A673 (cell line): ENCODE measurements at regions of chr5 and their contacts with region 1.

Region 1: GRCh38 chr5:142324871-142325724 is at the start of gene SPRY4:
- DNase-seq: peak; percentile 99
- H3K4me3 ChIP-seq: peak within 1 kb of the TSS; percentile 77
- H3K27ac ChIP-seq: peak within 1 kb of the TSS; percentile 98
- H3K4me1 ChIP-seq: peaks cover 61% of the 10 kb centered on the region
- H3K27me3 ChIP-seq: no peaks in the 10 kb centered on the region
- CTCF ChIP-seq: no peak; the same call in 1 of the 2 replicates
- total RNA-seq, gene SPRY4: 35.5 and 35.6 TPM in 2 replicates

Region 2: GRCh38 chr5:142151436-142152383 is 173.4 kb before region 1 on chr5:
- CTCF ChIA-PET with region 1: no interaction called
- POLR2A ChIA-PET with region 1: no interaction called
- intact Hi-C with region 1: loop called (anchors 2 kb)
- DNase-seq: peak; percentile 88
- H3K4me3 ChIP-seq: no peak overlapping the region
- H3K27ac ChIP-seq: no peak overlapping the region
- H3K4me1 ChIP-seq: peaks cover 24% of the 10 kb centered on the region
- H3K27me3 ChIP-seq: no peaks in the 10 kb centered on the region
- CTCF ChIP-seq: peak; percentile 95

Region 3: DNA sequence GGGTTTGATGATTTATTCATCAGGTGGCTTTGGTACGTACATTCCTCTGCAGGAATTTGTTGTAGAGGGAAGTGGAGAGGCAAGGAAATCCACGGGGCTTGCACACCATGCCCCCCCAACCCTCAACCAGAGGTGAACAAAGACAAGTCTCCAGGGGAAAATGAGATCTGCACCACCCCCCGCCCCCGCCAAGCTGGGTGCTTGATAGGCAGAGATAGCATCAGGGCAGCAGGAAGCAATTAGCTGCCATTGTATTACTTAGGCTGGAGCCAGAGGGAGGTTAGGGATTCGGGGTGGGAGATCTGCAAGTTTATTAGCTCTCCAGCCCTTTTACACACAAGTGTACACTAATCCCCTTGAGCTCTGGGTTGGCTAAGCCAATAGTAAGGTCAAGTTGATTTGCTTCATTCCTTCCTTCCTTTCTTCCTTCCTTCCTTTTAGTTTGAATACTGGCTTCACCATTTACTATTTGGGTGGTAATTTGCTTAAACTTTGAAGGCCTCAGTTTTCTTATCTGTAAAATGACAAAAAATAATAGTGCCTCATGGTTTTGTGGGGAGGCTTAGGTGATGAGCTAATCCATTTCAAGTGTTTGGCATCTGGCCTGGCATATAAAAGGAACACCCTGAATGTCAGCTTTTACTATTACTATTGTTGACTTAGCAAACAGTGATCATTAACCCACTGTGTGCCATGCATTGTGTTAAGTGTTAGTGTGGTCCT is 34.4 kb before region 1 on chr5:
- CTCF ChIA-PET with region 1: no interaction called
- POLR2A ChIA-PET with region 1: no interaction called
- intact Hi-C with region 1: loop called (anchors 2 kb)
- DNase-seq: peak; percentile 98
- H3K4me3 ChIP-seq: no peak overlapping the region
- H3K27ac ChIP-seq: no peak overlapping the region
- H3K4me1 ChIP-seq: peaks cover 35% of the 10 kb centered on the region
- H3K27me3 ChIP-seq: no peaks in the 10 kb centered on the region
- CTCF ChIP-seq: no peak

Region 4: GRCh38 chr5:142356716-142357473 is 31.8 kb after region 1 on chr5:
- CTCF ChIA-PET with region 1: no interaction called
- POLR2A ChIA-PET with region 1: no interaction called
- intact Hi-C with region 1: loop called (anchors 1 kb)
- DNase-seq: peak; percentile 98
- H3K4me3 ChIP-seq: peak overlapping the region; percentile 44
- H3K27ac ChIP-seq: peak overlapping the region; percentile 99
- H3K4me1 ChIP-seq: peaks cover 60% of the 10 kb centered on the region
- H3K27me3 ChIP-seq: no peaks in the 10 kb centered on the region
- CTCF ChIP-seq: no peak

Region 5: GRCh38 chr5:142386137-142387032 is 61.3 kb after region 1 on chr5:
- CTCF ChIA-PET with region 1: no interaction called
- POLR2A ChIA-PET with region 1: no interaction called
- intact Hi-C with region 1: loop called (anchors 5 kb)
- DNase-seq: peak; percentile 63
- H3K4me3 ChIP-seq: no peak overlapping the region
- H3K27ac ChIP-seq: peak overlapping the region; percentile 84
- H3K4me1 ChIP-seq: peaks cover 48% of the 10 kb centered on the region
- H3K27me3 ChIP-seq: no peaks in the 10 kb centered on the region
- CTCF ChIP-seq: no peak

Region 6: GRCh38 chr5:142432369-142432863 is 107.3 kb after region 1 on chr5:
- CTCF ChIA-PET with region 1: no interaction called
- POLR2A ChIA-PET with region 1: no interaction called
- intact Hi-C with region 1: loop called (anchors 10 kb)
- DNase-seq: no peak
- H3K4me3 ChIP-seq: no peak overlapping the region
- H3K27ac ChIP-seq: peak overlapping the region; percentile 58
- H3K4me1 ChIP-seq: peaks cover 59% of the 10 kb centered on the region
- H3K27me3 ChIP-seq: no peaks in the 10 kb centered on the region
- CTCF ChIP-seq: no peak

Region 7: DNA sequence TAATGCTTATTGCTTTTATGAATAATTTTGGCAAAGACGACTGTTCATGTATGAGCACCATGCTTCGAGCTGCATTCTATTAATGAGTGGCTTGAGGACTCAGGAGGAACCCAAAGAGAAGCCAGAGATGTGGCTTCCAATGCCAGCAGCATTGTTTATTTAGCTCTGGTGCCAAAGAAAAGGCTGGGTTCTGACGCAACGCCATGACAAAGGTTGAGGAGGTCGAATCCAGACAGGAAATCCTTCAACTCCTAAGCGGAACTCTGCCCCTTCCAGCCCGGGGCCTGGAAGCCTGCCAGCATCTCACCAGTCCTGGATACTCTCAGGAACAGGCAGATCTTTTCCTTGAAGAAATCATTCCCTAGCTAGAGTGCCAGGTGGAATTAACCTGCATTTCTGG is 549.4 kb after region 1 on chr5:
- CTCF ChIA-PET with region 1: no interaction called
- POLR2A ChIA-PET with region 1: no interaction called
- intact Hi-C with region 1: loop called (anchors 10 kb)
- DNase-seq: peak; percentile 35
- H3K4me3 ChIP-seq: no peak overlapping the region
- H3K27ac ChIP-seq: no peak overlapping the region
- H3K4me1 ChIP-seq: peaks cover 81% of the 10 kb centered on the region
- H3K27me3 ChIP-seq: no peaks in the 10 kb centered on the region
- CTCF ChIP-seq: no peak